Tibial artery (tissue), 4 donors: ENCODE measurements at regions of chr22 and their contacts with region 1.

Region 1: GRCh38 chr22:39309881-39310714 is 9.3 kb downstream of the RPL3 start:
- DNase-seq: no peak
- H3K4me3 ChIP-seq: no peak overlapping the region
- H3K27ac ChIP-seq: no peak overlapping the region
- H3K4me1 ChIP-seq: peaks cover 0 to 24% (median 15%) of the 10 kb centered on the region in 4 donors
- H3K27me3 ChIP-seq: no peaks in the 10 kb centered on the region
- CTCF ChIP-seq: no peak

Region 2: GRCh38 chr22:39170825-39171622 is 139.1 kb before region 1 on chr22:
- intact Hi-C with region 1: loop called (anchors 2 kb)
- DNase-seq: peak; percentile 70 to 88
- H3K4me3 ChIP-seq: no peak overlapping the region
- H3K27ac ChIP-seq: no peak overlapping the region
- H3K4me1 ChIP-seq: peaks cover 10 to 38% (median 33%) of the 10 kb centered on the region in 4 donors
- H3K27me3 ChIP-seq: no peaks in the 10 kb centered on the region
- CTCF ChIP-seq: peak; percentile 92 to 97

Region 3: GRCh38 chr22:39292561-39293098 is 17.5 kb before region 1 on chr22:
- intact Hi-C with region 1: no loop called
- DNase-seq: peak; percentile 94
- H3K4me3 ChIP-seq: no peak overlapping the region
- H3K27ac ChIP-seq: peak overlapping the region; percentile 27 to 35
- H3K4me1 ChIP-seq: peaks cover 4 to 47% (median 28%) of the 10 kb centered on the region in 4 donors
- H3K27me3 ChIP-seq: peaks cover 0 to 13% of the 10 kb centered on the region in 2 donors
- CTCF ChIP-seq: no peak